ENCODE measurements at regions of chr11 and their contacts with region 1.

Region 1: DNA sequence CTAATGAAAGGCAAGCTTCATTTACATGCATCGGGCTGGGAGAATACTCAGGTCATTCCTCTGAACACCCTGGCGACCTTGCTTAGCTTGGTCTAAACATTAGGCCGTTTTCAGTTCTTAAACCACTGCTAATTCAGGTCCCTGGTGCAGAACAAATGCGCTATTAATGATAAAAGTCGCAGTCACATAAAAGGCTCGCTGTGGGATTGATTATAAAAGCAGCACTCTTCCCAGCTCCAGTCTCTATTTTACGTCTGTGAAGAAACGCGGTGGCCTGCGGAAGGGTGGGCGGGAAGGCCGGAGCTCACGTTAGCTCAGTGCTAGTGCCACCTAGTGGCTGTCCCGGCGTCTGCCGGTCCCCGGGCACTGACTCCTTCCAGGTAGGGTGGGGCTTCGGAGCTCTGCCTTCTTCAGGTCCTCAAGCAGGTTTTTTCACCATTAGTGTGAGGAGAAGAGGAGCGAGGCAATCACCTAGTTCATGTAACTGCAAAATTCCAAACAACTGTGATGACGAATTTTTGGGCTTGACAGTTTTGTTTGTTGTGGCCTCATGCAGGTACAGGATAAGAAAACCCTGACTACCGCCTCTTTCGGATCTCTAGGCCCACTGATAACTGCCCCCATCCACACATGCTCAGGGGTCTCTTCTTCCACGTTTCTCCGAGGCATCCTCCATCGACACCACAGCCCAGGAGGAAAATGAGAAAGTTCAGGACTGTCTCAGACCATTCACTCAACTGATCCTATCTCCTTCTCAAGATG is 66.5 kb upstream of the CLMP start:
- DNase-seq: no peak
- H3K4me3 ChIP-seq: peak overlapping the region; percentile 20
- H3K27ac ChIP-seq: no peak overlapping the region
- H3K27me3 ChIP-seq: peaks cover 9% of the 10 kb centered on the region
- CTCF ChIP-seq: peak; percentile 97

Region 2: GRCh38 chr11:123033895-123034294 is 227.6 kb before region 1 on chr11:
- CTCF ChIA-PET with region 1: interaction called, 14 read pairs
- POLR2A ChIA-PET with region 1: no interaction called
- DNase-seq: no peak
- H3K4me3 ChIP-seq: no peak overlapping the region
- H3K27ac ChIP-seq: no peak overlapping the region
- H3K27me3 ChIP-seq: peaks cover 5% of the 10 kb centered on the region
- CTCF ChIP-seq: peak; percentile 39; the same call in 1 of the 2 replicates

Region 3: DNA sequence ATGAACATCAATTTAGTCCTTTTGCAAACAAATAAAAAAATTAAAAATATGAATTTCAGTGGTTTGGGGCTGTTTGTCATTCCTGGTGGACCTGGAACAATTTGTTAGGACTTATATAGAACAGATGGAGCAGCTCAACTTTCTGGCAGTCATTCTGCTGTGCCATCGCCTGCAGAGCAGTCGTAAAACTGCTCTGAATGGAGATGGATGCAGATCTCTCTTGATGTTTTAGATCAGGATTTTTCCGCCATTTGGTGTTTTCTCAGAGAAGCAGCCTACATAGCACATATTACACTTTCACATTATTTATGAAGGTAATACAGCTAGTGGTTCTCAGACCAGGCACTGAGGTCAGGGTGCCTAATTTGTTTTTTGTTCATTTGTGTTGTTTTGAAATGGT is 167.8 kb before region 1 on chr11:
- CTCF ChIA-PET with region 1: interaction called, 134 read pairs
- POLR2A ChIA-PET with region 1: no interaction called
- DNase-seq: no peak
- H3K4me3 ChIP-seq: no peak overlapping the region
- H3K27ac ChIP-seq: no peak overlapping the region
- H3K27me3 ChIP-seq: no peaks in the 10 kb centered on the region
- CTCF ChIP-seq: no peak

Region 4: GRCh38 chr11:123122341-123122740 is 139.2 kb before region 1 on chr11:
- CTCF ChIA-PET with region 1: interaction called, 16 read pairs
- POLR2A ChIA-PET with region 1: no interaction called
- DNase-seq: no peak
- H3K4me3 ChIP-seq: no peak overlapping the region
- H3K27ac ChIP-seq: peak overlapping the region; percentile 75
- H3K27me3 ChIP-seq: no peaks in the 10 kb centered on the region
- CTCF ChIP-seq: no peak

Region 5: DNA sequence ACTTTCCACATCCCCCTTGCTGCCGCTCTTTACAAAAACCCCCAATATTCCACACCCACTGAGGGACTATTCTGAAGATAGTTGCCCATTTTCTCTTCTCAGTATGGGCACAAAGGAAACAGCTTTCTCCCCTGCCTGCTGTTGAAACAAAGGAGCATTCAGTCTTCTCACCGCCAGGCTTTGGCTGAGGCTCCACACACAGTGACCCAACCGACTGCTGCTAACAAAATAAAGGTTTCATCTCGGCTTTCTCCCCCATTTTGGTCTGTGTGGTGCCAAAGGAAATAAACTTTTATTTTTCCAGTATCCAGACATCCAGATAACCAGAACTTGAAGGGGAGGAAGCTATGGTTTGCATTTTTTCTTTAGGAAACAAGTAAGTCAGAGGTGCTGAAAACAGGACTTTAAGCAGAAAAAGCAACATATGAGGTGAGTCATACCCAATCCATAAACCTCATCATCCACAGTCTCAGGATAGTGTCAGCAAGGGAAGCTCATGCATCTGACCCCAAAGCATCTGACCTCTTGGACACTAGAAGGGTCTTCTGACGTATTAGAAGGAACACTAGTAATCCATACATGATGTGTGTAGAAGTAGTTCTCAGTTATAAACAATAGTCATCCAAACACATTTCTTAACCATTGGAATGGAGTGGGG is 72.9 kb before region 1 on chr11:
- CTCF ChIA-PET with region 1: interaction called, 14 read pairs
- POLR2A ChIA-PET with region 1: no interaction called
- DNase-seq: peak; percentile 91
- H3K4me3 ChIP-seq: peak overlapping the region; percentile 50
- H3K27ac ChIP-seq: peak overlapping the region; percentile 96
- H3K27me3 ChIP-seq: no peaks in the 10 kb centered on the region
- CTCF ChIP-seq: peak; percentile 27; the same call in 1 of the 2 replicates

Region 6: DNA sequence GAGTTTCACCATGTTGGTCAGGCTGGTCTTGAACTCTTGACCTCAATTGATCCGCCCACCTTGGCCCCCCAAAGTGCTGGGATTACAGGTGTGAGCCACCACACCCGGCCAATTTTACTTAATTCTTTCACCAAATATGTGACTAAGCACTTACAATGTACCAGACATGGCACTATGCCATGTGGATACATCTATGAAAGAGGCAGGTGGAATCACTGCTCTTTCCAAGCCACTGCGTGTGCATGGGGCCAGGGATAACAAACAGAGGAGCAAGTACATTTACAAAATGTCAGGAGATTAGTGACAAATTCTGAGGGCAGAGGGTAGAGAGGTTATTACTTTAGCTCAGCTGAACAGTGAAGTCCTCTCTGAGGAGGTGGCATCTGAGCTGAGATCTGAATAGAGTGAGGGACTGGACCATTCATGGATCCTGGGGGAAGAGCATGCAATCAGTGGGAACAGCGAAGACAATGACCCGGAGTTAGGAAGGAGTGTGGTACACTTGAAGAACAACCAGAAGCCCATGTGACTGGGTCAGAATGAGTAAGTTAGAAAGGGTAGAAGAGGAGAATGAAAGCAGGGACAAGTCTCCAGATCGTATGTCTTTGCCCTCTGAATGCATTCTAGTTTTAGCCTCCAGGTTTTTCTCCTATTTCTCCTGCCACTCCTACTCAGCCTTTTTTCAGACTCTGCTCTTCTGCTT is 130.3 kb after region 1 on chr11:
- CTCF ChIA-PET with region 1: no interaction called
- POLR2A ChIA-PET with region 1: no interaction called
- DNase-seq: no peak
- H3K4me3 ChIP-seq: no peak overlapping the region
- H3K27ac ChIP-seq: no peak overlapping the region
- H3K27me3 ChIP-seq: peaks cover 18% of the 10 kb centered on the region
- CTCF ChIP-seq: no peak

Region 7: GRCh38 chr11:124454552-124454951 is 1193.0 kb after region 1 on chr11:
- CTCF ChIA-PET with region 1: no interaction called
- POLR2A ChIA-PET with region 1: no interaction called
- DNase-seq: no peak
- H3K4me3 ChIP-seq: no peak overlapping the region
- H3K27ac ChIP-seq: no peak overlapping the region
- H3K27me3 ChIP-seq: no peaks in the 10 kb centered on the region
- CTCF ChIP-seq: no peak

Measured in AG04450 (cell line).